ENCODE measurements at regions of chr1 and their contacts with region 1.

Region 1: DNA sequence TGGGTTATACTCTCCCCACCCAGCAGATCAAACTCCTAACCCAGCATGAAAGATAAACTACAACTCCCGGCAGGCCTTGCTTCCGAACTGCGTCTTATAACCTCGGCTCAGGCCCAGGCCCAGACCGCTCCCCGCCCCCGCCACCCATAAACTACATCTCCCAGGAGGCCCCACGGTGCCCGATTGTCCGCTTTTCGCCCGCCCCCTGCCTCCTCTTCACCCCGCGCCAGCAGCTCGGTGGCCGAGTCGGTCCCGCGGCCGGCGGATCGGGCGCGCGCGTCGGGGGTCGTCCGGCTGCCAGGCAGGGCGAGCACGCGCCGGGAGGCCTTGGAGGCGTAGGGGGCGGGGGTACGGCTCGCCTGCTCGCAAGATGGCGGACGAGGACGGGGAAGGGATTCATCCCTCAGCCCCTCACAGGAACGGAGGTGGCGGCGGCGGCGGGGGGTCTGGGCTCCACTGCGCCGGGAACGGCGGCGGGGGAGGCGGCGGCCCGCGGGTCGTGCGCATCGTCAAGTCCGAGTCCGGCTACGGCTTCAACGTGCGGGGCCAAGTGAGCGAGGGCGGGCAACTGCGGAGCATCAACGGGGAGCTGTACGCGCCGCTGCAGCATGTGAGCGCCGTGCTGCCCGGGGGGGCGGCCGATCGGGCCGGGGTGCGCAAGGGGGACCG is at the start of gene SNX27:
- DNase-seq: peak; percentile 94
- ATAC-seq: peak; percentile 96 to 97
- total RNA-seq, gene SNX27: 29.8 to 32.3 TPM

Region 2: GRCh38 chr1:151553659-151554058 is 58.3 kb before region 1 on chr1:
- intact Hi-C with region 1: no loop called
- DNase-seq: no peak
- ATAC-seq: no peak

Region 3: DNA sequence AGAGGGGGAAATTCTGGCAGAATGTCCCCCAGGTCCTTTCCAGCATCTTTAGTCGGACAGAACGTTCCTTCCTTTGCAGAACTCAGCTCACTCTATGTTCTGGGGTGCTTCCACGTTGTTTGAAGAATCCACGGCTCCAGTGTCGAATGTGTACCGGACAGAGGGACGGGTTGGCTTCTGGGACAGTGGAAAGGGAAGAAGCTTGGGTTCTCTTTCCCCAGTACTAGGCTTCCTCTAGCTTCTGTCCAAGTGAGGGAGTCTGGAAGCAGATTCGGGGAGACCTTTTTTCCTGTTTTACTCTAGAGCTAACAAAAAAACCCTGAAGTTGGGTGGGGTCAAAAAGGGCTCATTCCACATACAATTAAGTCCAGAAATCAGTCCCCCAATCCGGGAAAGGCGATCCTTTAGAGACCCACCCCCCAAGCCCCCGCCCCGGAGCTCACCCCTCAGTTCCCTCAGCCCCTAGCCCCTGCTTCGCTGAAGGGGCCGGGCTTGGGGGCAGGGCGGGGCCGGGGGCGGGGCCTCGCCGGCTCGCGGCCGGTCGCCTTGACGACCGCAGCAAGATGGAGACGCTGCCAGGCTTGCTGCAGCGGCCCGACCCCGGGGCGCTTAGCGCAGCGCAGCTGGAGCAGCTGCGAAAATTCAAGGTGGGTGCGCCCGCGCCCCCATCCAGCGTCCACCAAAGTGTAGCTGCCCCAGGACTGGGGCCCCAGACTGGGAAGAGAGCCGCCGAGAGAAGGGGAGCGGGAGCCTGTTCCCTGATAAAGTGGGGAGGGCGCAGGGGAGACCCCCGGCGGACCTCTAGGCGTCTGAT is 109.2 kb after region 1 on chr1 and contains the start of gene RIIAD1:
- intact Hi-C with region 1: loop called in 1 of 2 experiments (anchors 5 kb)
- DNase-seq: no peak
- ATAC-seq: peak; percentile 88 to 92
- total RNA-seq, gene RIIAD1: 3.3 TPM

Measured in left cardiac atrium (tissue), 4 donors.